A549 (cell line): ENCODE measurements at regions of chr1 and their contacts with region 1.

Region 1: DNA sequence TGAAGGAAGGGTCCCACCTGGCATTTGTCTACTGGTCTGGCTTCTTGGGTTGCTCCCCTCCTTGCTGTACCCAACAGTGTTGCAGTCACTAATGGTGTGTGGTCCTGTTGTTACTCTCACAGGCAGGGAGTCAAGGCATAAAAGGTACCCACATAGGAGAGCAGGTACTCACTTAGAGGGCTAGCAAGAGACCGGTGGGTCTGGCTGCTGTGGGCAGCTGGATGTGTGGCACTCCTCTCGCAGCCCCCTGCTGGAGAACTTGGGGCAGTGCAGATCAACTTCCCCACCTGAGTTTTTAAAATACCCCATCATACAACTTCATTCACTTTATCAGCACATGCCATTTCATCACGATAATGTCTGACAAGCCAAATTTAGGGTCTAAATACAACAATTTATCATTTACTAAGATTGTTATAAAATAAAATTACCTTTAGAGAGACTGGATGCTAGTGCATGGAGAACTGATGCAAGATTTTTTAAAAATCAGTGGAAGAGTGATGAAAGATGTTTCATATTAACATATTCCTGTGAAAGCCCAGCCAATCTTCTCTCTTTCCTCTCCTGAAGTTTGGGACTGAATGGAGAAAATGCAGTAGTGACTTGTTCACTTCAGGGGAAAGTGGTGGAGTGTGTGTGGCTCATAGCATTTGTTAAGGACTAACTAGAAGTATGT is 42.8 kb downstream of the ACP6 start:
- DNase-seq: peak; percentile 43 to 81
- ATAC-seq: peak; percentile 72 to 89
- H3K4me3 ChIP-seq: no peak overlapping the region
- H3K27ac ChIP-seq: no peak overlapping the region
- H3K4me1 ChIP-seq: no peaks in the 10 kb centered on the region
- CTCF ChIP-seq: peak; percentile 79
- EP300 ChIP-seq: no peak
- POLR2A ChIP-seq: no peak
- RAD21 ChIP-seq: peak; percentile 66 to 70

Region 2: GRCh38 chr1:147640553-147641165 is 13.1 kb after region 1 on chr1:
- CTCF ChIA-PET with region 1: interaction called, 24 read pairs
- POLR2A ChIA-PET with region 1: no interaction called
- DNase-seq: peak; percentile 68 to 73
- ATAC-seq: peak; percentile 95 to 99
- H3K4me3 ChIP-seq: no peak overlapping the region
- H3K27ac ChIP-seq: no peak overlapping the region
- H3K4me1 ChIP-seq: peaks cover 6% of the 10 kb centered on the region; the same call in 1 of the 3 replicates
- CTCF ChIP-seq: peak; percentile 74
- EP300 ChIP-seq: no peak
- POLR2A ChIP-seq: no peak
- RAD21 ChIP-seq: peak; percentile 57 to 60

Region 3: GRCh38 chr1:148010527-148010926 is 383.0 kb after region 1 on chr1:
- CTCF ChIA-PET with region 1: no interaction called
- POLR2A ChIA-PET with region 1: no interaction called
- DNase-seq: no peak
- ATAC-seq: no peak
- H3K4me3 ChIP-seq: no peak overlapping the region
- H3K27ac ChIP-seq: no peak overlapping the region
- H3K4me1 ChIP-seq: no peaks in the 10 kb centered on the region
- CTCF ChIP-seq: no peak
- EP300 ChIP-seq: no peak
- POLR2A ChIP-seq: no peak
- RAD21 ChIP-seq: no peak